ENCODE measurements at regions of chr1 and their contacts with region 1.

Region 1: DNA sequence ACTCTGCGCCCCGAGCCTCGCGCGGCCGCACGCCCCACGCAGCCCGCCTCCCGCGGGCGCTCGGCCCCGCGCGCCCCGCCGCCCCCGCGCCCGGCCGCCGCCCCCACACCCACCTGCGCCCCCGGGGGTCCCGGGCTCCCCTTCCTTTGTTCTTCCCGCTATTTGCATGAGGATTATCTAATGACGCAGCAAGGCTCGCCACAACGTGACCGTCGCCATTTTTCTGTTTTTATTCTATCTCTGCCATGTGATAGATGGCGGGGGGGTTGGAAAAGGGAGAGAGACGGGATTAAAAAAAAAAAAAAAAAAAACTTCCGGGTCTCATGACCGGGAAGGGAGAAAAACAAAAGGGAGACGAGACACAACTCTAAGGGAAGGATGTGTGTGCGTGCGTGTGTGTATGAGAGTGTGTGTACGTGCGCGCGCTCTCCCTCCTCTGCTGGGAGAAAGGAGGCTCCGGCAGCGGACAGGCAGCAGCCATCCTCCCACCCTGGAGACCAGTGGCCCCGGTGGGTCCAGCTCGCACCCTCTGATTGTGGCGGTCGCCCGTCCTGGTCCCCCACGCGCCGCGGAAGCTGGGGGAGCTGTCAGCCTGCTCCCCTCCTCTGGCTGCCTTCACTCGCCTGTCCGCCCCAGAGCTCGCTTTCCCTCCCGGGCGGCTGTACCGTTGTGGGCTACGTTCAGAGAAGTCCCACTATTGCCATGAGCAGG is 80.4 kb upstream of the AK4 start:
- DNase-seq: peak; percentile 38
- H3K4me3 Mint-ChIP-seq: peak overlapping the region; percentile 89
- H3K27ac Mint-ChIP-seq: peak overlapping the region; percentile 97
- H3K4me1 Mint-ChIP-seq: peaks cover 31% of the 10 kb centered on the region
- H3K27me3 Mint-ChIP-seq: peaks cover 2% of the 10 kb centered on the region

Region 2: DNA sequence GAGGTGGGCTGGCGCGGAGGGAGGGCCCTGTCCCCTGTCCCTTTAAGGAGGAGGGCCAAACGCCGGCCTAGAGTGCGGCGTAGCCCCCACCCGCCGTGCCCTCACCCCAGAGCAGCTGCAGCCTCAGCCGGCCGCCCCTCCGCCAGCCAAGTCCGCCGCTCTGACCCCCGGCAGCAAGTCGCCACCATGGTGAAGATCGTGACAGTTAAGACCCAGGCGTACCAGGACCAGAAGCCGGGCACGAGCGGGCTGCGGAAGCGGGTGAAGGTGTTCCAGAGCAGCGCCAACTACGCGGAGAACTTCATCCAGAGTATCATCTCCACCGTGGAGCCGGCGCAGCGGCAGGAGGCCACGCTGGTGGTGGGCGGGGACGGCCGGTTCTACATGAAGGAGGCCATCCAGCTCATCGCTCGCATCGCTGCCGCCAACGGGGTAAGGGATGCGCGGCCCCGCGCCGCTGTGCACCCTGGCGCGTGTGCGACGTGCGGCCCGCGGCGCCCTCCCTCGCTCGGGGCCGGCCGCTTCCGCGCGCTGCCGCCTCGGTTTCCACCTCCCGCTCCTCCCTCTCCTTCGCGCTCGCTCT is 1474.3 kb before region 1 on chr1 and contains the start of gene PGM1:
- intact Hi-C with region 1: loop called (anchors 10 kb)
- DNase-seq: peak; percentile 70
- H3K4me3 Mint-ChIP-seq: peak within 1 kb of the TSS; percentile 97
- H3K27ac Mint-ChIP-seq: peak within 1 kb of the TSS; percentile 99
- H3K4me1 Mint-ChIP-seq: peaks cover 33% of the 10 kb centered on the region
- H3K27me3 Mint-ChIP-seq: no peaks in the 10 kb centered on the region
- total RNA-seq, gene PGM1: 61.8 and 62.0 TPM in 2 replicates

Region 3: DNA sequence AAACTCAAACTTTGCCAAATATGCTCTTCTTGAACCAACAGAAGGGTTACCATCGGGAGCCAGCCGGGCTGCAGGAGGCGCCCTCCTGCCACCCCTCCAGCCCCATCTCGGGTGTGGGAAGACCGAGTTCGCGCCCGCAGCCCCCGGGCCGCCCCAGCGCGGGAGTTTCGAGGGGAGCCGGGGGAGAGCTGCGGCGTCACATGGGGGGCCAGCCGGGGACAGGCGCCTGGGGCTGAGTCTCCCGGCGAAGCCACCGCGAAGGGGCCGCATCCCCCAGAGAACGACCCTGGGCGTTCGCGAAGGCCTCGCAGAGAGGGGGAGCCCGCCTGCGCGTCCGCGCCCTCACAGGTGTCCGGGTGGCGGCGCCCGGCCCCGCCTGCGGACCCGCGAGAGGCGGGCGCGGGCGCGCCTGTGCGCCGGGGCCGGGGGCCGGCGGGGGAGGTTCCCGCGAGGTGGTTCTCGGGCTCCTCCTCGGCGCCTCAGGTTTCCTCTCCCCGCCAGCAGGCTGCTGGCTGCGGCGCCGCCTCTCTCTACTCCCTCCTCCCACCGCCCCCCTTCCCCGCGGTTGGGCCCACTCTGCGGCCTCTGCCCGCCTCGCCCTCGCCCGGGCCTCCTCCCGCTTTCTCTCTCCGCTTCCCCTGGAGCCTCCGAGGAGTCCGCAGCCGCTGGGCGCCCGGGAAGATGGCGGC is 323.0 kb before region 1 on chr1 and contains the start of gene RAVER2:
- intact Hi-C with region 1: loop called (anchors 10 kb)
- DNase-seq: peak; percentile 20
- H3K4me3 Mint-ChIP-seq: peak within 1 kb of the TSS; percentile 78
- H3K27ac Mint-ChIP-seq: no peak within 1 kb of the TSS
- H3K4me1 Mint-ChIP-seq: peaks cover 7% of the 10 kb centered on the region
- H3K27me3 Mint-ChIP-seq: peaks cover 38% of the 10 kb centered on the region
- total RNA-seq, gene RAVER2: 0.55 and 0.83 TPM in 2 replicates

Region 4: DNA sequence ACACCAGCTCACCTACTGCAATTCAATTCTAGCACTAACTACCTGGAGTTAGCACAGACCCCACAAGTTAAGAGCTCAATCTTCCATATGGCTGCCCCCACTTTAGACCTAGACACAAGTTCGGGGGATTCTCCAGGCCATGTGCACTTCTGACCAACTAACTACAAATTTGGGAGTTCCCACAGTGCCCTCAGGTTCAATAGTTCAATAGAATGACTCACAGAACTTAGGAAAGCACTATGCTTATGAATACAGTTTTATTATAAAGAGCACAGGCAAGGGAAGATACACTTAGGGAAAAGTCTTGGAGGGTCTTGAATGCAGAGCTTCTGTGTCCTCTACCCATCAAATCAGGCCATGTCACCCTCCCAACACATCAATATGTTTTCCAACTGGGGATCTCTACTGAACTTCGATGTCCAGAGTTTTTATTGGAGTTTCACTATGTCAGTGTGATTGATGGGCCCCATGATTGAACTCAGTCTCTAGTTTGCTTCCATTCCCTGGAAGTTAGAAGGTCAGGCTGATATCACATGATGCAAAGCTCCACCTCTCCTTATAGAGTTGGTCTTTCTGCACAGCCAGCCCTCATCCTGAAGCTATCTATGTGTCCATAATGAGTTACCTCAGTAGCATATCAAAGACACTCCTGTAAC is 276.7 kb before region 1 on chr1:
- intact Hi-C with region 1: no loop called
- DNase-seq: no peak
- H3K4me3 Mint-ChIP-seq: no peak overlapping the region
- H3K27ac Mint-ChIP-seq: no peak overlapping the region
- H3K4me1 Mint-ChIP-seq: no peaks in the 10 kb centered on the region
- H3K27me3 Mint-ChIP-seq: no peaks in the 10 kb centered on the region

Region 5: DNA sequence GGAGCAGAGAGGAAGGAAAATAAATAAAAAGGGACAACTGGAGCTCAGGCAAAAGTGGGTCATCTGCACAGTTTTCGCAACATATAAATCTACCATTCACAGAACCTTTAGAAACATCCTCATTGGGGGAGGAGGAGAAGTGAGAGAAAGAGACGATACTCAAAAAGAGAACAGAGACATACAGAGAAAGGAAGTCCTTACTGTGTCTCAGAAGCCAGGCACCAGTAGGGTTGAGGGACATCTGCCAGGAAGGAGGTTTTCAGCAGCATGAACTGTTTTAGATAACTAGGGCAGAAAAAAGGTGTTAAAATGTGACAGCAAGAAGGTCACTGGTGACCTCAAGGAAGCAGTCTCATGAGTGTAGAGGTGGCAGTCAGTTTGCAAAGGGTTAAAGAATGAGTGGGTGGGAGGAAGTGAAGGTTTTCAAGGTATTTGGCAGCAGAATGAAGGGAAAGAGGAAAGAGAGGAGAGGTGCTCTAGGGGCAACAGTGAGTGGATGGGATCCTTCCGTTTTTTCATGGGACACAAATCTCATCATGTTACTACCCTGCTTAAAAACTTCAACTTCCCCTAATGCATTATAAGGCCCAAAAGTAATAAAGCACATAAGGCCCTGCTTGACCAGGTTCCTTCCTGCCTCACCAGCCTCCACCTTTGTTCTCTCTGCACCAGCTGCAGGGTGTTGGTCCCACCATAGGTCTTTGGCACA is 110.8 kb before region 1 on chr1:
- intact Hi-C with region 1: loop called (anchors 2 kb)
- DNase-seq: no peak
- H3K4me3 Mint-ChIP-seq: no peak overlapping the region
- H3K27ac Mint-ChIP-seq: no peak overlapping the region
- H3K4me1 Mint-ChIP-seq: peaks cover 40% of the 10 kb centered on the region
- H3K27me3 Mint-ChIP-seq: no peaks in the 10 kb centered on the region

Region 6: DNA sequence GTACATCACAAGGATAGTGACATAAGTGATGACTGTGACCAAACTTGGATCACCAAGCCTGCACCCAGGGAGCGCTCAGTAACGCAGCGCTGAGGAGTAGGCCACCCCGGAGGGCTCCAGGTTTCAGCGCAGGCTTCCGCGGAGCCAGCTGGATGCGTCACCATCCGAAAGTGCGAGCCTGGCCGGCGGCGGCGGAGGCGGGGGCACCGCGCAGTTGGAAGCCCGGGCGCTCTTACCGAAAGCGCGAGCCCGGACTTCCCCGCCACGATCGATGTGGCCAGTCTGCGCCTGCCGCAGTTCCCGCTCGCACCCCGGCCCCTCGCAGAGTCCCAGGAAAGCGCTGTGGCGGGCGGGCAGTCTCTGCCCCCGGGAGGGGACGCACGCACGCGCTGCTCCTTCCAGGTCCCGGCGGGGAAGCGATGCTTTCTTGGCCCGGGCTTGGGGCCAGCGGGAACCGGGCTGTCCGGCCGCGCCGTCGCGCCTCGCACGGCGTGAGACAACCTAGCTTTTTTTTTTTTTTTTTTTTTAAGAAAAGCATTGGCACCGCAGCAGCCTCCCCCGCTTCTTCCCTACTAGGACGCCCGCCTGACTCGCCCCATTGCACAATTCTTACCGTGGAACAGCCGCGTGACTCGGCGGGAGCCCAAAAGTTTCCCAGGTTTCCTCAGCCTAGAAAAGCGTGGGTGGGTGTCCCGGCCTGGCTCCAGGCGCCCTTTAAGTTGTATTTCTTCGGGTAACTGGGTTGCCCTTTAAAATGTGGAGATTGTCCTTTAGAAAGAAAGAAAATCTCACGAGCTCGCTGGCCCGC is 64.9 kb before region 1 on chr1:
- intact Hi-C with region 1: loop called (anchors 5 kb)
- DNase-seq: peak; percentile 50
- H3K4me3 Mint-ChIP-seq: peak overlapping the region; percentile 67
- H3K27ac Mint-ChIP-seq: no peak overlapping the region
- H3K4me1 Mint-ChIP-seq: peaks cover 34% of the 10 kb centered on the region
- H3K27me3 Mint-ChIP-seq: peaks cover 32% of the 10 kb centered on the region

Region 7: GRCh38 chr1:65108025-65108642 is 40.5 kb after region 1 on chr1:
- intact Hi-C with region 1: no loop called
- DNase-seq: no peak
- H3K4me3 Mint-ChIP-seq: no peak overlapping the region
- H3K27ac Mint-ChIP-seq: no peak overlapping the region
- H3K4me1 Mint-ChIP-seq: no peaks in the 10 kb centered on the region
- H3K27me3 Mint-ChIP-seq: peaks cover 20% of the 10 kb centered on the region

Region 8: DNA sequence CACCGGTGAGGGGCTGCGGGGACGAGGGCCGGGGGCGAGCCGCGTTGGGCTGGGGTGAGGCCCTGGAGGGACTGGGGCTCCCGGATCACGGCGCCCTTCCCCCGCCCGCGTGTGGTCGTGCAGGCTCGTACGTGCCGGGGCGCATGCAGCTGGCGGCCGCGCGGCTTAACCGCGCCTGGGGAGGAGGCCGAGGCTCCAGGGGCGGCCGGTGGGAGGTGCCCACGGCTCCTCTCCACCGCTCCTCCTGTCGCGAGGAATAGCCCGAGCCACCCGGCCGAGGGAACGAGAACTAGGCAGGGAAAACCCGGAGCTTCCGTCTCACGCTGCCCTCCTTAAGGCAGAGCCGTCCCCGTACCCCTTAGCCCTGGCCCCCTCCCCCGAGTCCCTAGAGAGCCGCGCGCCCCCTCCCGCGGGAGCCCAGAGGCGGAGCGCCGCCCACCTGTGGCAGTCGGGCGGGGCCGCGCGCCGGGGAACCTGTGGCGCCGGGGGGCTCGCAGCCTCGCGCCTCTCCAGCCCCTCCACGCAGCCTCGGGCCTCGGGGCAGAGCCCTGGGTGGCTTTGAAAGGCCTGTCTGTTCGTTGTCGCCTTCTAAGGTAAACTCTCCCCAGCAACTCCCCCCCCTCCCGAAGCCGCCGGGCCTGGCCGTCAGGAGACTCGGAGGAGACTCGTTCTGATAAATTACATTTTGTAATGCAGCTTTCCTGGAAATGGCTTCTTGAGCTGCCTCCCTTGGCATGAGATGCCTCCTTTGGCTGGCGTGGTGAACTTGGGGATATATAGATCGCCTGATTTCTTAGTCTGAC is 81.1 kb after region 1 on chr1:
- intact Hi-C with region 1: loop called (anchors 2 kb)
- DNase-seq: peak; percentile 43
- H3K4me3 Mint-ChIP-seq: peak overlapping the region; percentile 90
- H3K27ac Mint-ChIP-seq: peak overlapping the region; percentile 88
- H3K4me1 Mint-ChIP-seq: peaks cover 40% of the 10 kb centered on the region
- H3K27me3 Mint-ChIP-seq: peaks cover 14% of the 10 kb centered on the region

Measured in activated T-helper 2 cell treated with anti-CD3 and anti-CD28 coated beads, Interferon-gamma antibody, Interleukin-2, Interleukin-4, amounts not matched to agents 10 μg/mL and 5 μg/mL and 100 μg/mL, durations not matched to agents 14 hours and 24 hours and 36 hours (primary cell).